Activated T-helper 2 cell treated with anti-CD3 and anti-CD28 coated beads, Interferon-gamma antibody, Interleukin-2, Interleukin-4, amounts not matched to agents 10 μg/mL and 5 μg/mL and 100 μg/mL, durations not matched to agents 14 hours and 24 hours and 36 hours (primary cell): ENCODE measurements at regions of chr4 and their contacts with region 1.

Region 1: DNA sequence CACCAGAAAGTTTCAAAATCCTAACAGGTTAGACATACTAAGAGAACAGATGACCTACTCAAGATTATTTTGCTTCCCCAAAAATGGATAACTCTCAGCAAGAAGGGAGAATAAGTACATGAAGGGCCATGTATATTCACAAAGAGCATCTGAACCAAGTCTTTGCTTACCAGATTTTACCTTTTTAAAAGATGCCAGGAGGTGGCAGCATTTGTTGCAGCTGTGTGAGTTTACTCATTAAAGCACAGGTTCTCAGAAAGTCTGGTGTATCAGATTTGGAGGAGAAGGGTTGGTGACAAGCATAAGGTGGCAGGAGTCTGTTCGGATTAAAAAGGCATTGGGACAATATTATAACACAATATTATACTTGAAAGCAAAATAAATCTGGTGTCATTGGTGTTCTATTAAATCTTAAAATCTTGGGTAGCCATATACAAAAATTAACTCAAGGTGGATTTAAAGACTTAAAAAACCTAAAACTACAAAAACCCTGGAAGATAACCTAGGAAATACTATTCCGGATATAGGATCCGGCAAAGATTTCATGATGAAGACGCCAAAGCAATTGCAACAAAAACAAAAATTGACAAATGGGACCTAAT is 51.3 kb upstream of the NFKB1 start:
- DNase-seq: peak; percentile 42
- H3K4me3 Mint-ChIP-seq: no peak overlapping the region
- H3K27ac Mint-ChIP-seq: no peak overlapping the region
- H3K4me1 Mint-ChIP-seq: peaks cover 65% of the 10 kb centered on the region
- H3K27me3 Mint-ChIP-seq: no peaks in the 10 kb centered on the region

Region 2: GRCh38 chr4:101678153-101678552 is 771.7 kb before region 1 on chr4:
- intact Hi-C with region 1: no loop called
- DNase-seq: no peak
- H3K4me3 Mint-ChIP-seq: no peak overlapping the region
- H3K27ac Mint-ChIP-seq: no peak overlapping the region
- H3K4me1 Mint-ChIP-seq: no peaks in the 10 kb centered on the region
- H3K27me3 Mint-ChIP-seq: no peaks in the 10 kb centered on the region

Region 3: GRCh38 chr4:102466298-102466697 is 16.4 kb after region 1 on chr4:
- intact Hi-C with region 1: loop called (anchors 2 kb)
- DNase-seq: no peak
- H3K4me3 Mint-ChIP-seq: no peak overlapping the region
- H3K27ac Mint-ChIP-seq: no peak overlapping the region
- H3K4me1 Mint-ChIP-seq: peaks cover 31% of the 10 kb centered on the region
- H3K27me3 Mint-ChIP-seq: peaks cover 3% of the 10 kb centered on the region

Region 4: GRCh38 chr4:102525097-102525496 is 75.2 kb after region 1 on chr4:
- intact Hi-C with region 1: loop called (anchors 2 kb)
- DNase-seq: no peak
- H3K4me3 Mint-ChIP-seq: no peak overlapping the region
- H3K27ac Mint-ChIP-seq: peak overlapping the region; percentile 53
- H3K4me1 Mint-ChIP-seq: peaks cover 83% of the 10 kb centered on the region
- H3K27me3 Mint-ChIP-seq: no peaks in the 10 kb centered on the region

Region 5: DNA sequence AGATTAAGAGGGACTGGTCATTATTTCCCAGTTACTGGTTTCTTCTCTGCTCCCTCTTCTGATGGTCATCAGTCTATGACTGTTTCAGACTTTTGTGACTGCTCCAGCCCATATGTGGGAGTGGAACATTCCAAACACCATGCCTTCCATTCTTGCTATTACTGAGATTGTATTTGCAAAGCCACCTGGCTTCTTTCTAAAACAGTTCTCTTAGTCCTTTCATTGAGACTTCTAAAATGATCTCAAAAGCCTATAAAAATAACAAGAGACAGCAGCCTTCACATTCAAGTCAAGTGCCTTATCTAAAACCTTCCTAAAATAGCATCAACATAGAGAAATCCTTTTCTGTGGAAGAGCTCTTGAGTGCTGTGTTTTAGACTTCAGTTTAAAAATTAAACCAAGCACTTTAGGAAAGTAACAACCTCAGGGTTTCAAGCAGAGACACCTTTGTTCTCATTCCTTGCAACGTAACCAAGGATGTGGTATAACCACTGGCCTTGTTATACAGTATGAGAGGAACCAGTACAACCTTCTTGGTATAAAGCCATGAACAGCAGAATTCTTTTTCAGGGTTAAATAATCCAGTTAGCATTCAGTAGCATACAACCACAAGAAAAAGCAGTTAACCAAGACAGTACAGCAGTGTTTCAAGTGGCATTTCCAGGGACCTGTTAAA is 148.4 kb after region 1 on chr4:
- intact Hi-C with region 1: loop called (anchors 10 kb)
- DNase-seq: no peak
- H3K4me3 Mint-ChIP-seq: peak overlapping the region; percentile 57
- H3K27ac Mint-ChIP-seq: peak overlapping the region; percentile 89
- H3K4me1 Mint-ChIP-seq: peaks cover 64% of the 10 kb centered on the region
- H3K27me3 Mint-ChIP-seq: no peaks in the 10 kb centered on the region

Region 6: DNA sequence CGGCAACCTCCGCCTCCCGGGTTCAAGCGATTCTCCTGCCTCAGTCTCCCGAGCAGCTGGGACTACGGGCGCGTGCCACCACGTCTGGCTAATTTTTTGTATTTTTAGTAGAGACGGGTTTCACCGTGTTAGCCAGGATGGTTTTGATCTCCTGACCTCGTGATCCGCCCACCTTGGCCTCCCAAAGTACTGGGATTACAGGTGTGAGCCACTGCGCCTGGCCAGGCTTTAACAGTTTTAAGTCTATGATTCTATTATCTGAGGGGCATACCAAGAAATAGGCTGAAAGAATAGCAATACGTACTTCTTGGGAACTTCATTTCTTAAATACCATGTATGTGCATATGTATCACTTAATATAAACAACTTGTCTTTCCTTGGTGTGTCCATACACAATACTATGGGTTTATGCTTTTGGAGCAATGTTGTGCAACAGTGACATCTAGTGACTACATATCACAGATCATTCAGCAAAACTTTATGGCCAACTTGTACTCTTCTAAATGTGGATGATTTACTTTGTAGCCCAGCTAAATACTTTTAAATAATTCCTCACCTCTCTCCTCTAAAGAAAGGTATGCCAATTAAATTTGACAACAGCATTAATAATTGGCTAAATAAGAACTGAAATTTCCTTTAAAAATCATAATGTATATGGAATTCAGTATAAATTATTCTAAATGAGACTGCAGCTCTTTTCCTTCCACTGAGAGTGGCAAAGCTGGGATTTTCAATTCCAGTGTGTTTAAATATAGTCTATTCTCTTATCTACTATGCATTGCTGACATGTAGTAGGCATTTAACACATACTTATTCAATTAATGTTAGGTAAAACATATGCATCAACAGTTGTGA is 559.2 kb after region 1 on chr4:
- intact Hi-C with region 1: loop called (anchors 5 kb)
- DNase-seq: no peak
- H3K4me3 Mint-ChIP-seq: no peak overlapping the region
- H3K27ac Mint-ChIP-seq: no peak overlapping the region
- H3K4me1 Mint-ChIP-seq: peaks cover 6% of the 10 kb centered on the region
- H3K27me3 Mint-ChIP-seq: peaks cover 10% of the 10 kb centered on the region

Region 7: GRCh38 chr4:103091601-103092223 is 641.9 kb after region 1 on chr4:
- intact Hi-C with region 1: loop called (anchors 5 kb)
- DNase-seq: peak; percentile 33
- H3K4me3 Mint-ChIP-seq: peak overlapping the region; percentile 54
- H3K27ac Mint-ChIP-seq: peak overlapping the region; percentile 65
- H3K4me1 Mint-ChIP-seq: peaks cover 24% of the 10 kb centered on the region
- H3K27me3 Mint-ChIP-seq: no peaks in the 10 kb centered on the region